Activated CD4-positive, alpha-beta memory T cell treated with anti-CD3 and anti-CD28 coated beads for 36 hours (primary cell): ENCODE measurements at regions of chr5 and their contacts with region 1.

Region 1: GRCh38 chr5:159163027-159163700 is 46.2 kb downstream of the RNF145 start:
- DNase-seq: peak; percentile 24
- H3K4me3 Mint-ChIP-seq: no peak overlapping the region
- H3K27ac Mint-ChIP-seq: peak overlapping the region; percentile 66
- H3K4me1 Mint-ChIP-seq: peaks cover 41% of the 10 kb centered on the region
- H3K27me3 Mint-ChIP-seq: no peaks in the 10 kb centered on the region

Region 2: DNA sequence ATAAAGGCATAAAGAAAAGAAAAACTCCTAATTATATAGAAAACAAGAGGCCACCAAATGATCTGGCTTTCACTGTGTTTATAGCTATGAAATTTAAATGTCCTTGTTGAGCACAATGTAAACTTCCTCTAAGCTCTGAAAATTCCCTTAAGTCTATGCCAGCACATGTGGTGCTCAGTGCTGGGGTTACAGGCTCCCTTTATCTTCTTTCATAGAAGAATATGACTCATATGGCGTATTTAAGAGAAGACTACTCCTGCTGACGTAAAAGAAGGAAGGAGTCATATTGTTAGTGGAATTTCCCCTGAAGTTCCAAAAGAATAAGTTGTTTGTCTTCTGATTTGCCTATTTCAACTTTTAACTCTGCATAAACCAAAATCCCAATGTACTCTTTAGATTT is 15.8 kb after region 1 on chr5:
- CTCF ChIA-PET with region 1: interaction called, 7 read pairs
- POLR2A ChIA-PET with region 1: no interaction called
- intact Hi-C with region 1: loop called (anchors 1 kb)
- DNase-seq: peak; percentile 56
- H3K4me3 Mint-ChIP-seq: peak overlapping the region; percentile 3
- H3K27ac Mint-ChIP-seq: peak overlapping the region; percentile 93
- H3K4me1 Mint-ChIP-seq: peaks cover 87% of the 10 kb centered on the region
- H3K27me3 Mint-ChIP-seq: no peaks in the 10 kb centered on the region

Region 3: GRCh38 chr5:159316519-159317383 is 153.6 kb after region 1 on chr5:
- CTCF ChIA-PET with region 1: interaction called, 128 read pairs
- POLR2A ChIA-PET with region 1: no interaction called
- intact Hi-C with region 1: no loop called
- DNase-seq: peak; percentile 58
- H3K4me3 Mint-ChIP-seq: no peak overlapping the region
- H3K27ac Mint-ChIP-seq: no peak overlapping the region
- H3K4me1 Mint-ChIP-seq: no peaks in the 10 kb centered on the region
- H3K27me3 Mint-ChIP-seq: no peaks in the 10 kb centered on the region